Panc1 (cell line): ENCODE measurements at regions of chr10 and their contacts with region 1.

Region 1: GRCh38 chr10:97333560-97334369 is 764 bp downstream of the FRAT2 start:
- DNase-seq: no peak
- ATAC-seq: peak; percentile 36
- H3K4me3 ChIP-seq: peak overlapping the region; percentile 62 to 76
- H3K27ac ChIP-seq: peak overlapping the region; percentile 92
- H3K4me1 ChIP-seq: peaks cover 49% of the 10 kb centered on the region
- H3K27me3 ChIP-seq: no peaks in the 10 kb centered on the region
- CTCF ChIP-seq: no peak

Region 2: DNA sequence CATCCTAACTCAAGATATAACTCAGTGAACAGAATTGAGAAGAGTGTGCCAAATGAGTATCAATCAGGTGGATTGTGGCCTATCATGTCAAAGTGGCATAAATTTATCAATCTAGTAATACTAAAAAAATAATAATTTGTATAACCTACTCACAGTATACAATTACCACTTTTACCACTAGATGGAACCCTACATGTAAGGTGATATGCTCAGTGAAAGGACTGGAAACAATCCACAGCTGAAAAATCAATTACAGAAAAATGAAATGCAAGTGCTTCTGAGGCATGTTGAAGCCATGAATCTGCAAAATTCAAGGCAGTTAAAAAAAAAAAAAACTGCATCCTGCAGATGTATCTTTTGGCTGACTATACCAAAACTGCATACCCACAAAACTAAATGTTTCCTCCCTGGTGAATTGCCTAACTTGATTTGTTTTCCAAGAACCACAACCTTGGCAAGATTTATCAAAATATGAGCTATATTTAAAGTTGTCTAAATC is 55.2 kb before region 1 on chr10:
- CTCF ChIA-PET with region 1: interaction called, 26 read pairs
- POLR2A ChIA-PET with region 1: interaction called, 10 read pairs
- in situ Hi-C with region 1: no loop called
- intact Hi-C with region 1: loop called (anchors 5 kb)
- DNase-seq: peak; percentile 78
- ATAC-seq: peak; percentile 77
- H3K4me3 ChIP-seq: no peak overlapping the region
- H3K27ac ChIP-seq: peak overlapping the region; percentile 86
- H3K4me1 ChIP-seq: peaks cover 53% of the 10 kb centered on the region
- H3K27me3 ChIP-seq: no peaks in the 10 kb centered on the region
- CTCF ChIP-seq: peak; percentile 77; the same call in 1 of the 2 replicates